HepG2 (cell line): ENCODE measurements at regions of chr18 and their contacts with region 1.

Region 1: DNA sequence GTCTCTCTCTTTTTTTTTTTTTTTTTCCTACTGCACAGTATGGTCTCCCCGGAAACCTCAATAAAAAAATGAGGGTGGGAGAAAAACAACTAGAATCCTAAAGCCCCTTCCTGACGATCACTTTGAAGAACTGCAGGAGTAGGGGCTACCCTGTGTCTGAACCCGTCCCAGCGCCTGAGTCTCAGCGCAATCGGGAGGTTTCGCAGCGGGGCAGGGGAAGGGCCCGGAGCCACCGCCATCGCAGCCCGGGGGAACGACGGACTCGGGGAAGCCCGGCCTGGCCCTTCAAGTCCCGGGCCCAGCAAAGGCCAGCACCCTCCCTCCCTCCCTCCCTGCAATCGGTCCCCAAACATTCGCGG is 411 bp downstream of the NARS1 start:
- DNase-seq: no peak
- ATAC-seq: peak; percentile 64
- H3K4me3 ChIP-seq: peak overlapping the region; percentile 87 to 98 (median 94)
- H3K27ac ChIP-seq: peak overlapping the region; percentile 86
- H3K4me1 ChIP-seq: peaks cover 26% of the 10 kb centered on the region
- H3K27me3 ChIP-seq: no peaks in the 10 kb centered on the region; a peak in 1 of 5 replicates
- CTCF ChIP-seq: no peak
- EP300 ChIP-seq: no peak
- POLR2A ChIP-seq: no peak
- RAD21 ChIP-seq: no peak

Region 2: DNA sequence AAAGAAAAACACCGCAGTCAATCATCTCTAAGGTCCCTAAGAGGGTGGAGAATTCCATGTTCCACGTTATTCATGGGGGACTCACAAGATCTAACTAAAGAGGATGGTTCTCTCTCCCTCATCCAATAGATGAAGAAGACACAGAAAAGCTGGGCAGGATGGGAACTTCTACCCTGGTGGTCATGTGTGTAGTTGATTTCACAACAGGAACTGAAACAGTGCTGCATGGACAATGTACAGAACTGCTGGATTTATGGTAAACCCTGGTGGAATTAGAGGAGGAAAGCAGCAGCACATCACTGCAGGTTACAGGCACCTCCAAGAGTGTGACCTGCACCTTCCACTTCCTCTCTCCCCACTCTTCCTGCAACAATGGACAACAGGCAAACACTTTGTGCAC is 66.1 kb before region 1 on chr18:
- CTCF ChIA-PET with region 1: no interaction called
- POLR2A ChIA-PET with region 1: no interaction called
- in situ Hi-C with region 1: no loop called
- intact Hi-C with region 1: no loop called
- DNase-seq: no peak
- ATAC-seq: no peak; the same call in 2 of the 3 replicates
- H3K4me3 ChIP-seq: no peak overlapping the region
- H3K27ac ChIP-seq: no peak overlapping the region
- H3K4me1 ChIP-seq: no peaks in the 10 kb centered on the region
- H3K27me3 ChIP-seq: no peaks in the 10 kb centered on the region
- CTCF ChIP-seq: no peak
- EP300 ChIP-seq: no peak
- POLR2A ChIP-seq: no peak
- RAD21 ChIP-seq: no peak

Region 3: GRCh38 chr18:57819671-57820460 is 198.6 kb after region 1 on chr18:
- CTCF ChIA-PET with region 1: no interaction called
- POLR2A ChIA-PET with region 1: no interaction called
- in situ Hi-C with region 1: no loop called
- intact Hi-C with region 1: loop called (anchors 10 kb)
- DNase-seq: peak; percentile 71
- ATAC-seq: peak; percentile 59
- H3K4me3 ChIP-seq: no peak overlapping the region
- H3K27ac ChIP-seq: no peak overlapping the region
- H3K4me1 ChIP-seq: peaks cover 26% of the 10 kb centered on the region
- H3K27me3 ChIP-seq: no peaks in the 10 kb centered on the region; a peak in 1 of 5 replicates
- CTCF ChIP-seq: no peak
- EP300 ChIP-seq: no peak
- POLR2A ChIP-seq: no peak
- RAD21 ChIP-seq: no peak

Region 4: GRCh38 chr18:57859314-57859713 is 238.1 kb after region 1 on chr18:
- CTCF ChIA-PET with region 1: no interaction called
- POLR2A ChIA-PET with region 1: no interaction called
- in situ Hi-C with region 1: no loop called
- intact Hi-C with region 1: loop called (anchors 5 kb)
- DNase-seq: peak; percentile 44
- ATAC-seq: peak; percentile 94
- H3K4me3 ChIP-seq: no peak overlapping the region
- H3K27ac ChIP-seq: no peak overlapping the region
- H3K4me1 ChIP-seq: no peaks in the 10 kb centered on the region
- H3K27me3 ChIP-seq: no peaks in the 10 kb centered on the region
- CTCF ChIP-seq: peak; percentile 76
- EP300 ChIP-seq: no peak
- POLR2A ChIP-seq: no peak
- RAD21 ChIP-seq: peak; percentile 58

Region 5: GRCh38 chr18:58768293-58768974 is 1147.2 kb after region 1 on chr18:
- CTCF ChIA-PET with region 1: no interaction called
- POLR2A ChIA-PET with region 1: no interaction called
- in situ Hi-C with region 1: no loop called
- intact Hi-C with region 1: no loop called
- DNase-seq: peak; percentile 35
- ATAC-seq: peak; percentile 98
- H3K4me3 ChIP-seq: peak overlapping the region; percentile 49 to 68 (median 49); a peak in 5 of 6 replicates
- H3K27ac ChIP-seq: no peak overlapping the region
- H3K4me1 ChIP-seq: peaks cover 52% of the 10 kb centered on the region
- H3K27me3 ChIP-seq: peaks cover 1 to 21% of the 10 kb centered on the region in 2 experiments; a peak in 2 of 5 replicates
- CTCF ChIP-seq: peak; percentile 97
- EP300 ChIP-seq: no peak
- POLR2A ChIP-seq: no peak
- RAD21 ChIP-seq: peak; percentile 86